GM12878 (cell line): ENCODE measurements at regions of chr20 and their contacts with region 1.

Region 1: GRCh38 chr20:53643031-53643832 is 49.6 kb upstream of the ZNF217 start:
- DNase-seq: peak; percentile 92
- ATAC-seq: peak; percentile 99
- H3K4me3 ChIP-seq: peak overlapping the region; percentile 37
- H3K27ac ChIP-seq: peak overlapping the region; percentile 88
- H3K4me1 ChIP-seq: peaks cover 15% of the 10 kb centered on the region
- H3K27me3 ChIP-seq: no peaks in the 10 kb centered on the region
- CTCF ChIP-seq: 0 out of 6 replicates have a peak, but pooled peaks of 1 of the 3 experiments have one; percentile 7
- EP300 ChIP-seq: peak; percentile 18 to 87; a peak in 3 of 4 replicates
- POLR2A ChIP-seq: peak; percentile 83
- RAD21 ChIP-seq: 0 out of 2 replicates have a peak, but pooled peaks have one; percentile 13

Region 2: DNA sequence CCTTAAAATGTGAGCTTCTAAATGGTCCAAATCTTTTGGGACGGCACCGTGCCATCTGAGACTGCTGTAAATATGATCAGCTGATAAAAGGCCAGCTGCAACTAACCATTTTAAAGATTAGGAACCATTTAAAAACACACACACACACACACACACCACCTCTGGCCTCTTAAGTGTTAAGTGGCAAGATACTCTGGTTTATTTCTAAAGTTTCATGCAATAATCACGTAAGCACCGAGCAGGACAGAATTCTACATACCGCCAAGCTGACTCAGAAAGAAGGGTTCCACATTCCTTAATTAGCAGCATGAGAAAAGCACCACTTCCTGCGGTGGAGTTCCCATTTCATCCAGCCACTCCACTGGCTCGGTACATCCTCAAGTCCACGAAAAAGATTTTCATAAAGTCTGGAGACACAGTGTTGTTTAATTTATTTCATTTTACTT is 31.8 kb before region 1 on chr20:
- CTCF ChIA-PET with region 1: no interaction called
- POLR2A ChIA-PET with region 1: interaction called, 5 read pairs
- RAD21 ChIA-PET with region 1: interaction called, 7 read pairs
- SMC1A ChIA-PET with region 1: interaction called, 10 read pairs
- in situ Hi-C with region 1: no loop called
- intact Hi-C with region 1: no loop called
- DNase-seq: peak; percentile 82
- ATAC-seq: peak; percentile 84
- H3K4me3 ChIP-seq: peak overlapping the region; percentile 15; the same call in 1 of the 2 replicates
- H3K27ac ChIP-seq: peak overlapping the region; percentile 87
- H3K4me1 ChIP-seq: peaks cover 15% of the 10 kb centered on the region
- H3K27me3 ChIP-seq: no peaks in the 10 kb centered on the region
- CTCF ChIP-seq: no peak
- EP300 ChIP-seq: peak; percentile 71 to 80; a peak in 3 of 4 replicates
- POLR2A ChIP-seq: no peak
- RAD21 ChIP-seq: no peak

Region 3: DNA sequence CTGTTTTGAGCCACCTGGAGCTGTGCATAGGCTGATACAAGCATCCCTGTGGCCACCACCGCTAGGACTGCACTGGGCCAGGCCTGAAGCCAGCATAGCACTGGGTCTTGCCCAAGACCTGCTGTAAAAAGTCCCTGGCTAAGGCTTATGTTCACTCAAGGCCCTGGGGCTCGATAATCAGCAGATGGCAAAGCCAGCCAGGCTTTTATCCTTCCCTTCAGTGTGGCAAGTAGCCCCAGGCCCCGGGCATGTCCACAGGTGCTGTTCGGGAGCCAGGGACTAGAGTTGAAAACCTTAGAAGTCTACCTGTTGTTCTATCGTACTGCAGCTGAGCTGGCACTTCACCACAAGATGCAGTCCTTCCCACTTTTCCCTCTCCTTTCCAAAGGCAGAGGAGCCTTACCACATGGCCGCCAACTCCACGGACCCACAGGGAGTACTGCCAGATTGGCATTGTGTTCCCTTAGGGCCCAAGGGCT is 176.8 kb after region 1 on chr20:
- CTCF ChIA-PET with region 1: no interaction called
- POLR2A ChIA-PET with region 1: no interaction called
- RAD21 ChIA-PET with region 1: no interaction called
- SMC1A ChIA-PET with region 1: no interaction called
- in situ Hi-C with region 1: no loop called
- intact Hi-C with region 1: no loop called
- DNase-seq: no peak
- ATAC-seq: no peak
- H3K4me3 ChIP-seq: no peak overlapping the region
- H3K27ac ChIP-seq: no peak overlapping the region
- H3K4me1 ChIP-seq: peaks cover 7% of the 10 kb centered on the region
- H3K27me3 ChIP-seq: no peaks in the 10 kb centered on the region
- CTCF ChIP-seq: no peak
- EP300 ChIP-seq: no peak
- POLR2A ChIP-seq: no peak
- RAD21 ChIP-seq: no peak

Region 4: DNA sequence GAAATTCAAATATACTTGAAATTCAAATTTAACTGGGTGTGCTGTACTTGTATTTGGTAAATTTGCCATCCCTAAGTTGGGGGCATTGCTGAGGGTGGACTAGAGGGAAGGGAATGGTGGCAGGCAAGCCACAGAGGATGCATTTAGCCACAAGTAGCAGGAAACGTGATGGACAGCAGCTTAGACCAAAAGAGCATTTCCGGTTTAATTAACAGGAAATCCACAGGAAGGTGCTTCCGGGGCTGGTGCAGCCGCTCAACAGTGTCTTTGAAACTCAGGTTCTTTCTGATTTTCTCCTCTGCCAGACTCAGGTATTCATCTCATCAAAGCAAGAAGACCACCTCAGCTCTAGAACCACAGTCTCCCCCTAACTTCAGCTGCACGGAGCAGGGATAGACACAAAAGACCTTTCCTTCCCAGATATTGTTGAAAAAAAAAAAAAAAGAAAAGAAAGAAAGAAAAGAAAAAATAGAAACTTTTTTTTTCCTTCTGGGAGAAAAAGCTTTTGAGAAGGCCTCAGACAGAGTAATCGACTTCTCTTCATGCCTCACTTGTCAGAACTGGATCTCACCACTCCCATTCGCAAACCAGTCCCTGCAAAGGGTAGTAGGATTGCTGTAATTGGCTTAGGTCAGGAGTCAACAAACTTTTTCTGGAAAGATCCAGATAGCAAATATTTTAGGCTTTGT is 435.2 kb after region 1 on chr20:
- CTCF ChIA-PET with region 1: no interaction called
- POLR2A ChIA-PET with region 1: no interaction called
- RAD21 ChIA-PET with region 1: no interaction called
- SMC1A ChIA-PET with region 1: no interaction called
- in situ Hi-C with region 1: no loop called
- intact Hi-C with region 1: no loop called
- DNase-seq: no peak
- ATAC-seq: peak; percentile 52
- H3K4me3 ChIP-seq: 0 out of 2 replicates have a peak overlapping the region, but pooled peaks have one; percentile 5
- H3K27ac ChIP-seq: peak overlapping the region; percentile 13; the same call in 1 of the 2 replicates
- H3K4me1 ChIP-seq: peaks cover 28% of the 10 kb centered on the region
- H3K27me3 ChIP-seq: no peaks in the 10 kb centered on the region
- CTCF ChIP-seq: no peak
- EP300 ChIP-seq: no peak
- POLR2A ChIP-seq: no peak
- RAD21 ChIP-seq: no peak